Left cardiac atrium (tissue), 4 donors: ENCODE measurements at regions of chr12 and their contacts with region 1.

Region 1: GRCh38 chr12:712172-712863 is 40.1 kb upstream of the WNK1 start:
- DNase-seq: no peak
- ATAC-seq: no peak

Region 2: DNA sequence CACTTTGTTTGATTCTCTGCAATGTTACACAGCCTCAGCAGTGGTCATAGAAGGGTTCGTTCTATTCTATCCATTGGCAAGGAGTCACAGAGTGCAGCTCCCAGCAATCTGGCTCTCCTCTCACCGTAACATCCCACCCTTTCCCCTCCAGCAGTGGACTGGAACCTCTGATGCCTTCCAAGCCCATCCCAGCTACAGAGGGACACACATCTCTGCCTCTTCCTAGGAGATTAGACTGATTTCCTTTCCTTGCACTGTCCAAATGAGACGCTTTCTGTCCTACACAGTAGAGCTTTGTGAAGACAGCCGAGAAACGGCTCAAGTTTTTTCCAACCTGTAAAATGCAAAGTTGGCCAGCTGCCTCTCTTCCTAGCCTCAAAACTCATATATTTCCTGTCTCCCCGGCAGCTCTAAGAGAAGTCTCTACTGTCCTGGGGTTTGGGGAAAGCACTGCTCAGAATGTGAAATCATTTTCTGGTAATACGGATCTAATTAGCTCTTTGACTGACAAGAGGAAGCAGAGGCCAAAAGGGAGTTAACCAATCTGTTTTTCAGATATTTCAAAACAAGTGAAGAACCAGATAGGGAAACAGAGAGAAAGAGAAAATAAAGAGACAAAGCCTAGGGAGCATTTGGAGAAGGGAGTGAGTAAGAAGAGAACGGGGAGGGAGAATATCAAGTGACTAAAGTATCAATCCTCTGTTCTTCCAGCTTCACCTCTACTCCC is 49.6 kb before region 1 on chr12:
- intact Hi-C with region 1: loop called in 1 of 2 experiments (anchors 5 kb)
- DNase-seq: no peak
- ATAC-seq: peak; percentile 56 to 76

Region 3: DNA sequence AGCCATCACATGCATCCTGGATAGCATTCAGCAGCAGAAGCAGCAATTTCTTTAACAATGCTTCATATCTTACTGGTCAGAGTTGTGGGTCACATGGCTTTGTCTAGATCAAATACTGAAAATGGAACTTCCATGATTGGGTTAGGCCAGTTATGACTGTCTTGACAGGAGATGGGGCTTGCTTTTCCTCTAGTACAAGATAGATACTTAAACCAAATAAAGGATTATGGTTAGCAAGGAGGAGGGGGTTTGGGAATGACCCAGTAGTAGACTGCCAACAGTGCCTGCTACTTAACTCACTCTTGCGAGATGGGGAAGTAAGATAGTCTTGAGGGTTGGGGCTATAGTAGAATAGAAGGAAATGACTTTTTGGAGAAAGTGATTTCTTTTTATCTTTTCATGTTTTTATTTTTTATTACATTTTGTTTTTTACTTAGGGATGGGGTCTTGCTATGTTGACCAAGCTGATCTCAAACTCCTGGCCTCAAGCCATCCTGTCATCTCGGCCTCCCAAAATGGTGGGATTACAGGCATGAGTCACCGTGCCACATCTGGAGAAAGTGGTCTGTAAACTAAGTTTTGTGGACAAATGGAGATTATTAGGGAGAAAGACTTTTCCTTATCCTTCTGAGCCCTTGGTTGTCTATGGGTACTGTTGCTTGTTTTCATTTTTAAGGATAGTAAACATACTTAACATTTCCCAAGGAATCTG is 77.7 kb after region 1 on chr12:
- intact Hi-C with region 1: no loop called
- DNase-seq: no peak
- ATAC-seq: peak in 1 of 2 donors; percentile 34